Natural killer cell (primary cell): ENCODE measurements at regions of chr6 and their contacts with region 1.

Region 1: GRCh38 chr6:3742426-3743344 is 8.8 kb downstream of the PXDC1 start:
- DNase-seq: peak; percentile 85 to 91
- ATAC-seq: peak; percentile 86 to 94 (median 93)
- H3K4me3 ChIP-seq: no peak overlapping the region
- H3K4me3 Mint-ChIP-seq: peak overlapping the region; percentile 79
- H3K27ac ChIP-seq: peak overlapping the region; percentile 16
- H3K27ac Mint-ChIP-seq: peak overlapping the region; percentile 34 to 78
- H3K4me1 ChIP-seq: peaks cover 21% of the 10 kb centered on the region
- H3K4me1 Mint-ChIP-seq: peaks cover 12 to 13% of the 10 kb centered on the region in 2 donors
- H3K27me3 ChIP-seq: no peaks in the 10 kb centered on the region
- H3K27me3 Mint-ChIP-seq: peaks cover 18 to 26% of the 10 kb centered on the region in 2 donors
- CTCF ChIP-seq: peak; percentile 93

Region 2: GRCh38 chr6:3683331-3683730 is 59.4 kb before region 1 on chr6:
- intact Hi-C with region 1: no loop called
- DNase-seq: no peak
- ATAC-seq: no peak
- H3K4me3 ChIP-seq: no peak overlapping the region
- H3K4me3 Mint-ChIP-seq: no peak overlapping the region
- H3K27ac ChIP-seq: no peak overlapping the region
- H3K27ac Mint-ChIP-seq: no peak overlapping the region
- H3K4me1 ChIP-seq: no peaks in the 10 kb centered on the region
- H3K4me1 Mint-ChIP-seq: no peaks in the 10 kb centered on the region
- H3K27me3 ChIP-seq: no peaks in the 10 kb centered on the region
- H3K27me3 Mint-ChIP-seq: peaks cover 8 to 55% of the 10 kb centered on the region in 2 donors
- CTCF ChIP-seq: no peak

Region 3: GRCh38 chr6:3929281-3929798 is 186.7 kb after region 1 on chr6:
- intact Hi-C with region 1: loop called (anchors 1 kb)
- DNase-seq: no peak
- ATAC-seq: no peak
- H3K4me3 ChIP-seq: no peak overlapping the region
- H3K4me3 Mint-ChIP-seq: no peak overlapping the region
- H3K27ac ChIP-seq: no peak overlapping the region
- H3K27ac Mint-ChIP-seq: no peak overlapping the region
- H3K4me1 ChIP-seq: peaks cover 3% of the 10 kb centered on the region
- H3K4me1 Mint-ChIP-seq: no peaks in the 10 kb centered on the region
- H3K27me3 ChIP-seq: no peaks in the 10 kb centered on the region
- H3K27me3 Mint-ChIP-seq: peaks cover 4 to 11% of the 10 kb centered on the region in 2 donors
- CTCF ChIP-seq: no peak

Region 4: GRCh38 chr6:3990692-3991501 is 248.2 kb after region 1 on chr6:
- intact Hi-C with region 1: loop called (anchors 1 kb)
- DNase-seq: peak; percentile 62 to 79
- ATAC-seq: peak; percentile 87 to 98 (median 96)
- H3K4me3 ChIP-seq: no peak overlapping the region
- H3K4me3 Mint-ChIP-seq: no peak overlapping the region
- H3K27ac ChIP-seq: no peak overlapping the region
- H3K27ac Mint-ChIP-seq: no peak overlapping the region
- H3K4me1 ChIP-seq: peaks cover 4% of the 10 kb centered on the region
- H3K4me1 Mint-ChIP-seq: peaks cover 6 to 31% of the 10 kb centered on the region in 2 donors
- H3K27me3 ChIP-seq: no peaks in the 10 kb centered on the region
- H3K27me3 Mint-ChIP-seq: no peaks in the 10 kb centered on the region
- CTCF ChIP-seq: peak; percentile 75

Region 5: GRCh38 chr6:4008324-4009047 is 265.8 kb after region 1 on chr6:
- intact Hi-C with region 1: loop called (anchors 1 kb)
- DNase-seq: peak in 1 of 2 donors; percentile 78
- ATAC-seq: peak; percentile 63 to 88 (median 70)
- H3K4me3 ChIP-seq: no peak overlapping the region
- H3K4me3 Mint-ChIP-seq: no peak overlapping the region
- H3K27ac ChIP-seq: no peak overlapping the region
- H3K27ac Mint-ChIP-seq: peak overlapping the region; percentile 31 to 71
- H3K4me1 ChIP-seq: peaks cover 7% of the 10 kb centered on the region
- H3K4me1 Mint-ChIP-seq: peaks cover 29 to 38% of the 10 kb centered on the region in 2 donors
- H3K27me3 ChIP-seq: no peaks in the 10 kb centered on the region
- H3K27me3 Mint-ChIP-seq: no peaks in the 10 kb centered on the region
- CTCF ChIP-seq: peak; percentile 69

Region 6: GRCh38 chr6:4155848-4156466 is 413.3 kb after region 1 on chr6:
- intact Hi-C with region 1: loop called (anchors 1 kb)
- DNase-seq: peak; percentile 59 to 93
- ATAC-seq: peak; percentile 87 to 99 (median 99)
- H3K4me3 ChIP-seq: no peak overlapping the region
- H3K4me3 Mint-ChIP-seq: no peak overlapping the region
- H3K27ac ChIP-seq: no peak overlapping the region
- H3K27ac Mint-ChIP-seq: no peak overlapping the region
- H3K4me1 ChIP-seq: no peaks in the 10 kb centered on the region
- H3K4me1 Mint-ChIP-seq: peaks cover 0 to 5% of the 10 kb centered on the region in 2 donors
- H3K27me3 ChIP-seq: no peaks in the 10 kb centered on the region
- H3K27me3 Mint-ChIP-seq: peaks cover 10 to 20% of the 10 kb centered on the region in 2 donors
- CTCF ChIP-seq: peak; percentile 83

Region 7: DNA sequence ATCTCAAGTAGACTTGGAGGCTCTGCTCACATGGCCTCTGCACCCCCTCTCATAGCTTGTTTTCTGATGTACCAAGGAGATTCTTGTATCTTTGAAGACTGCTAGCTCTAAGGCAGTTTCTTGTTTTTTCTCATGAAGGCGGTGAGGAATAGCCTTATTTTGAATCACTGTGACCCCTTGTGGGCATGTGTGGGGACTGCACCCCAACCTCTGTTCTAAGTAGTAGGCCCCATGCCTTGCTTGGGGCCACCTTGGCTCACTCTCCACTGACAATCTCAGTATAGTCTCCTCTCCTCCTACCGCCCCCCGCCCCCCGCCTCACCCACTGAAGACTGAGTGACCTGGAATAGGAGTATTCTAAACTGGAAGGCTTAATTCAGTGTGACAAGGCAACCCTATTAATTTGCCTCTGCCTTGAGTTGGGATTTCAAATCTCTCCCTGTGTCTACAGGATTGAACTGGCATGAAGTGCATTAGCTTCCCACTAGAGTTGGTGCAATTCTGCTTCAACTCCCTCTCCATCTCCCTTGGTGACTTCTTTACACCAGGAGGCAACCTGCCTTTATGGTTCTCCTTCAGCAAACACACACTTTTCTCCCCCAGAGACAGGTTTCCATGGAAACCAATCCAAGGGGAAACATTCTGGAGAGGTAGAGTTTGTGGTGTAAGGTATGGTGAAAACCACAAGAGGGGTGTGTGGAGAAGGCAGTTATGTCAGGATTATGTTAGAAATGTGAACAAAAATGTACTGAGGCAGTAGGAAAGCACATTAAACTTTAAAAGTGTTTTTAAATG is 468.1 kb after region 1 on chr6:
- intact Hi-C with region 1: loop called (anchors 1 kb)
- DNase-seq: peak; percentile 29 to 68
- ATAC-seq: peak; percentile 69 to 87 (median 82)
- H3K4me3 ChIP-seq: no peak overlapping the region
- H3K4me3 Mint-ChIP-seq: no peak overlapping the region
- H3K27ac ChIP-seq: no peak overlapping the region
- H3K27ac Mint-ChIP-seq: no peak overlapping the region
- H3K4me1 ChIP-seq: no peaks in the 10 kb centered on the region
- H3K4me1 Mint-ChIP-seq: no peaks in the 10 kb centered on the region
- H3K27me3 ChIP-seq: no peaks in the 10 kb centered on the region
- H3K27me3 Mint-ChIP-seq: peaks cover 3 to 8% of the 10 kb centered on the region in 2 donors
- CTCF ChIP-seq: peak; percentile 68